PC-3 (cell line): ENCODE measurements at regions of chr14 and their contacts with region 1.

Region 1: GRCh38 chr14:94080471-94081289 is at the start of gene DDX24:
- DNase-seq: peak; percentile 95
- ATAC-seq: peak; percentile 96
- H3K4me3 ChIP-seq: peak within 1 kb of the TSS; percentile 92
- H3K27ac ChIP-seq: peak within 1 kb of the TSS; percentile 46
- H3K4me1 ChIP-seq: peaks cover 37% of the 10 kb centered on the region
- H3K27me3 ChIP-seq: no peaks in the 10 kb centered on the region
- CTCF ChIP-seq: no peak
- total RNA-seq, gene DDX24: 120 and 126 TPM in 2 replicates

Region 2: DNA sequence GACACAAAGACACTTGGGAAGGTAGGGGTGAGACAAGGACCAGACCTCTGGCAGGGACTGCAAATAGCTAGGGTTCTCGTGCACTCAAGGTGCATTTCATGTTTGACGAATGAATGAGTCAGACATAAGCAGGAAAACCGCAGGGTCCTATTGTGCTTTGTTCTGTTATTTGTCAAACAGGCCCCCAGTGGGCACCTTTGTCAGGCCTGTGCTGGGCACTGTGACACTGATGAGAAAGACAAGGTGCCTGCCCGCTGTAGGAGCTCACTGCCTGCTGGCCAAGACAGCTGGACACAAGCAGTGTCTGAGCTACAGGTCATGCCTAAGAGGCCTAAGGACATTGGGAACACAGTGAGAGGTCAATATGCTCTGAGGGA is 52.2 kb before region 1 on chr14:
- CTCF ChIA-PET with region 1: interaction called, 9 read pairs
- POLR2A ChIA-PET with region 1: no interaction called
- intact Hi-C with region 1: loop called (anchors 2 kb)
- DNase-seq: peak; percentile 93
- ATAC-seq: peak; percentile 65
- H3K4me3 ChIP-seq: no peak overlapping the region
- H3K27ac ChIP-seq: peak overlapping the region; percentile 98
- H3K4me1 ChIP-seq: peaks cover 56% of the 10 kb centered on the region
- H3K27me3 ChIP-seq: no peaks in the 10 kb centered on the region
- CTCF ChIP-seq: no peak

Region 3: DNA sequence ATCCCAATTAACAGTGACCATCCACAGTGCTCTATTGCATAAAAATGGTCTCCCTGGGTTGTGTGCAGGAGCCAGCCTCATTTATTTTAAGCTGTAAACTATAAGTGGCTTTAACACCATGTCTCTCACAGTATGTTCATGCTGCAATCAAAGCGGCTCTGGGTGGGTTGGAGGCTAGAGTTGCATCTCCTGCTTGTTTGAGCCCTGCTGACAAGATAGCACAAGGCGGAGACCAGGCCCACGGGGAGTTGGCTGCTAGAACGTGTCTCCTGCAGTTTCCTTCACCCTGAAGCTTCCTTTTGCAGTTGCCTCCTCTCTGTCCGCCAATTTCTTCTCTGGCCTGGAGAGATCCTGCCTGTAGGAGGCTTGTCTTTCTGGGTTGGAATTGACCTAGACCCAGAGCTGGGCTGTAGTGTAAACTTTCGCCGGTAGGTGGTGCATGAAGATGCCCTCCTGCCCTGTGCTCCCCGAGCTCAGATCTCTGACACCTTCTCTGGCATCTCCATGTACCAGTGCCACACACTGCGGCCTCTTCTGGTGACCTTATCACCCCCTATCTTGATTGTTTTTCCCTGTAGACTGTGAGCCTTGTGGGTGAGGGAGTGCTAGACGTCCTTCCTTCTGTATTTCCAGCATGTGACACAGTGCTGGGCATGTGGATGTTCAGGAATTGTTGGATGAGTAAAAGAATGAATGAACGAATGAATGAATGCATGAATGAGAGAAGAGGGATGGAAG is 44.2 kb before region 1 on chr14:
- CTCF ChIA-PET with region 1: interaction called, 12 read pairs
- POLR2A ChIA-PET with region 1: no interaction called
- intact Hi-C with region 1: no loop called
- DNase-seq: peak; percentile 82
- ATAC-seq: peak; percentile 92
- H3K4me3 ChIP-seq: no peak overlapping the region
- H3K27ac ChIP-seq: no peak overlapping the region
- H3K4me1 ChIP-seq: peaks cover 9% of the 10 kb centered on the region
- H3K27me3 ChIP-seq: no peaks in the 10 kb centered on the region
- CTCF ChIP-seq: peak; percentile 83

Region 4: DNA sequence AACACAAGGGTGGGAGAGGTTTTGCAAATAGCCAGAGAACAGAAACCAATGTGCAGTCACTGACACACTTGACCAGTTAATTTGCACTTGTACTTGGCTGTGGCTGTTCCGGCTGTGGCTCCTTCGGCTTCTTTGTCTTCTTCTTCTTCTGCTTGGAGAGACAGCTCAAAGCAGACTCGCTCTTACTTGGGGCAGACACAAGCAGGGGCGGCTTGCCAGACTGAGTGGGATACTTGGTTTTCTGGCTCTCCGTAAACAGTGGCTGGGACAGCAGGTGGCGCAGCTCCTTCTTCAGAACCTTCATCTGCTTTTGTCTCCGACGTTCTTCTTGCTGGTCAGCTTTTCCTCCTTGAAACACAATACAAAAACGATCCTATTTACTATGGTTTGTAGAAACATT is 29.6 kb before region 1 on chr14:
- CTCF ChIA-PET with region 1: interaction called, 11 read pairs
- POLR2A ChIA-PET with region 1: no interaction called
- intact Hi-C with region 1: no loop called
- DNase-seq: peak; percentile 21
- ATAC-seq: no peak
- H3K4me3 ChIP-seq: no peak overlapping the region
- H3K27ac ChIP-seq: no peak overlapping the region
- H3K4me1 ChIP-seq: no peaks in the 10 kb centered on the region
- H3K27me3 ChIP-seq: no peaks in the 10 kb centered on the region
- CTCF ChIP-seq: peak; percentile 53